GM10248 (cell line): ENCODE measurements at regions of chr9 and their contacts with region 1.

Region 1: GRCh38 chr9:126833710-126834345 is 26.6 kb upstream of the ZBTB34 start:
- DNase-seq: no peak
- CTCF ChIP-seq: no peak

Region 2: DNA sequence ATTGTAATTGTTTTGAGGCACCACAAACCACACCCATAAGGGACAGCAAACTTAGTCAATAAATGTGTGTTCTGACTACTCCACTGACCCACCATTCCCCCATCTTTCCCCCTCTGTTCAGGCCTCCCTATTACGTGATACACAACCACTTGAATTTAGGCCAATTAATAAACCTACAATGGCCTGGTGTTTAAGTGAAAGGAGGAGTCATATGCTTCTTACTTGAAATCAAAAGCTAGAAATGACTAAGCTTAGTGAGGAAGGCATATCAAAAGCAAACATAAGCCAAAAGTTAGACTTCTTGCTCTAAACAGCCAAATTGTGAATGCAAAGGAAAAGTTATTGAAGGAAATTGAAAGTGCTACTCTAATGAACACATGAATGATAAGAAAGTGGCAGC is 14.3 kb before region 1 on chr9:
- CTCF ChIA-PET with region 1: interaction called, 12 read pairs
- POLR2A ChIA-PET with region 1: no interaction called
- DNase-seq: no peak
- CTCF ChIP-seq: no peak